Posterior cingulate gyrus (tissue), 11 donors: ENCODE measurements at regions of chr20 and their contacts with region 1.

Region 1: DNA sequence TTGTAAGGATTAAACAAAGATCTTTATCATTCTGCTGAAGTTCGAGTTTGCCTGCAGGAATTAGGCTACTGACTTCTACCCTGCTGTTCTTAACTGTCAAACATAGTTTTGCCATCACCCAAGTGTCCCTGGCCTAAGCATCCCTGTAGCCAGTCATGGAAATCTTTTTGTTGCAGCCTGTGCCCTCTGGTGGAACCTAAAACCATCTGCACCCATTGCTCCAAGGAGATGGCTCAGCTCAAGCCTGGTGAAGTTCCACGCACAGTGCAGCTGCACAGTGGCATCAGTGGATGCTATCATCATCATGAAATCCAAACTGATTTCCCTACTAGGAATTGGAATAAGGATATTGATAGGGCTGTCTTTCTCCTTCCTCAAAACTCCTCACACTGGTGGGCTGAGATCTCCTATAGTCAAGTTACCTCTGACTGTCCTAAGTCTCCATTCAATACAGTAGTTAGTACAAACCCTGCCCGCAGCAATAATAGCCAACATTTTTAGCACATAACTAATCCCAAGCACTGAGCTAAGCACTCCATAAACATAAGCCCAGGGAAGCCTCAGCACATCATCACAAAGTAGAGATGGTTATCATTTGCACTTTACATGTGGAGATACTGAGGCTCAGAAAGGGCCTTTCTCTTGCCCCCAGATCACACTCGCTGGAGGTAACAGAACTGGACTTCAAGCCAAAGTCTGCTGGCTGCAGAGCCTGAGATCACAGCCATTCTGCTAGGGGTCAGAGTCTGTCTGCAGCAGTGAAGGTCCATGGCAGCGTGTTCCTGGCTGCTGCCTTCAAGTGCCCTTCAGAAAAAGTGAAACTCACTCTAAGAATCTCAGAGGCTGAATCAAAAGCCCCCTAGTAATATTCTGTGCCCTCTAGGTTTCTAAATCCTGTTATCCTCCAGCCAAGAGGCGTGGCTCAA is 77.2 kb upstream of the MC3R start:
- DNase-seq: peak; percentile 17 to 88 (median 37)

Region 2: GRCh38 chr20:54680872-54681619 is 1490.3 kb before region 1 on chr20:
- intact Hi-C with region 1: loop called (anchors 5 kb)
- DNase-seq: peak in 3 of 10 donors; percentile 12 to 27 (median 19)

Region 3: GRCh38 chr20:55415567-55416142 is 755.7 kb before region 1 on chr20:
- intact Hi-C with region 1: loop called (anchors 2 kb)
- DNase-seq: no peak

Region 4: DNA sequence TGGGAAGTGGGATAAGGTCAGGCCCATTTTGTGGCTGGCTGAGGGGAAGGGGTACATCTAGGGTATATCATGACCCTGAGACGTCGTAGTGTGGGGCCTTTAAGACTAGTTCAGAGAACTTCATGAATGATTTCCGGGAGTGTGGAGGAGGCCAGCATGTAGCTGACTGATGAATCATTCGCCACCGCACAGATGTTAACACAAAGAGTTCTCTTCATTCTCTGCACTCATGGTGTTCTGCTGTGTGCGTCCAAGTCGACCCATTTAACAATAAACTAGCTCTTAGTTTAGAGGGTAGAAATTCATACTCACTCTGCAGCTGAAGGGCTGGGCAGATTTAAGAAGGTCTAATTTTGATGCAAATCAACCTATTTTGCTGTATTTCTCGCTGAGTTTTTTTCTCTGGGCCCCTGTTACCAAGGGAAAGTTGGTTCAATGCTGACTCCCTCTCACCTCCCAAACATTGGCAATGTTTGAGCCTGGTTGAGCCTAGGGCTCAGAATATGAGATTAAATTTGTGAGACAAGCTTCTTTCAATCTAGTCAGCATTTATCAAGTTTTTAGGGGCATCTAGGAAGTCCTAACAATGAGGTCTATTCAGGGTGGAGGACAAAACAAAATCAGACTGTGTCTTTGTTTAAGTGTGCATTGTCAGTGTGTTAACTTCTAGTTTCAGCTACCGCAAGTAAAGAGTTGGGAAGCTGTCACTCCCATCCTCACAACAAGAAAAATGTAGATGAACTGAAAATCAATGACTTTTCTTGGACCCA is 59.2 kb before region 1 on chr20:
- intact Hi-C with region 1: no loop called
- DNase-seq: peak in 6 of 10 donors; percentile 6 to 89 (median 30)

Region 5: DNA sequence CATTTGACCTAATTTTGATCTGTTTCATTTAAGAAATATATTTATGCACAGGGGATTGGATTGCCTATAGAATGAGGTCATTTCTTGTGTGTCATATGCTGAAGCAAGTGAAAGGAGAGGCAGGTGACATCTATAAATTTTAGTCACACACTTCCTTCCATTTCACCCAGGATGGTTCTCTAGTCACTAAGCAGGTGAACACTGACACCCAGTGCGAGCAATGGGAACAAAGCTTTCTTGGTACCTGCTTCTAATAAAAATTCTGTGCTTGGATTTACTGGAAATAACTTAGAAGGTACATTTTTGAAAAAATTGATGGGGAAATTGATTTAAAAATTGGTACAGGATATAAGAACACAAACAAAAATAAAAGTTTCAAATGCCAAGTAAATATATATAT is 10.2 kb after region 1 on chr20:
- intact Hi-C with region 1: no loop called
- DNase-seq: peak in 1 of 10 donors; percentile 7

Region 6: GRCh38 chr20:56712141-56712540 is 540.8 kb after region 1 on chr20:
- intact Hi-C with region 1: no loop called
- DNase-seq: peak in 2 of 10 donors; percentile 22 to 43